ENCODE measurements at regions of chr3 and their contacts with region 1.

Region 1: DNA sequence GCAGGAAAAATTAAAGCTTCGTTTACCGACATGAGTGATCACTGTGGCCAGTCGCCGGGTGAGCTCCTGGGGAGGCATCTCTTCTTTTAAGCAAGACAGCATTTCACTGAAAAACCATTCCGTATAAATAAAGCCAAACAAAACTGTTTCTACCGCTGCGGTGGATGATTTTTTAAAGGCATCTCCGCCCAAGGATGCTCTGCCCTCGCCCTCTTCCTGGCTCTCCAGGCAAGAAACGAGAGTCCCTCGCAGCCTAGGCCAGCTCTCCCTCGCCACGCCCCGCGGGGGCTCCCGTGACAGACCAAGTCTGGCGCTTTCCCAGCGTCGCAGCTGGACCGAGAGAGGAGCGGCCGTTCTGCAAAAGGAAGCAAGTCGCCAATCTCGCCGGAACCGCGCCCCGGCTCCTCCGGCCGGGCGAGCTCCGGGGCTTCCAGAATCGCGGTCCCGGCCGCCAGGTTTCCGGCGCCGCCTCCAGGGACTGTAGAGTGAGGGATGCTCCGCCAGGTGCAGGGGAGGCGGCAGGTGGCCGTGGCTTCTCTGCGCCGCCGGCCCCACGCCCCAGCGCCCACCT is 458 bp downstream of the MCF2L2 start:
- DNase-seq: peak; percentile 56 to 69 (median 58)
- ATAC-seq: peak; percentile 77
- H3K4me3 ChIP-seq: peak overlapping the region; percentile 88
- H3K27ac ChIP-seq: peak overlapping the region; percentile 34; the same call in 1 of the 3 replicates
- H3K4me1 ChIP-seq: peaks cover 8 to 25% of the 10 kb centered on the region in 2 experiments; a peak in 4 of 5 replicates
- H3K27me3 ChIP-seq: no peaks in the 10 kb centered on the region
- CTCF ChIP-seq: no peak
- EP300 ChIP-seq: no peak
- POLR2A ChIP-seq: no peak
- RAD21 ChIP-seq: no peak

Region 2: DNA sequence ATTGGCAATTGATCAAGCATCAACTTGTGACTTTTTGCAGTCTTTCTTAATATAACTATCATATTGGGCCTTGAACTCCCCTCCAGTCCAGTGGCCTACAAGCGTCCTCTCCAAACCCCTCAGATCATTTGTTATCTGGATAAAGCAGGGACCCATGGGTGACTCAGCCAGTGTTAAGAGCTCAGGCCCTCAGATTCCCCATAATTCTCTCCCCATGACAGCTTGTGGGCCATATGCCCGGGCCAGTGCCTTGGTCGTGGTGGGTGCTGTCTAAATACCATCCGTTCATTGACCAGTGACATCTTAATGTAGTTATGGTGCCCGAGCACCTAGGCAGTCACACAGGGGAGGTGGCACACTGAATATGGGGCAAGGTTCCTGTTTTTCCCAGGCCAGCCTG is 17.7 kb before region 1 on chr3:
- CTCF ChIA-PET with region 1: no interaction called
- POLR2A ChIA-PET with region 1: interaction called, 32 read pairs
- in situ Hi-C with region 1: no loop called
- intact Hi-C with region 1: no loop called
- DNase-seq: peak; percentile 38 to 91 (median 70)
- ATAC-seq: peak; percentile 95
- H3K4me3 ChIP-seq: no peak overlapping the region
- H3K27ac ChIP-seq: peak overlapping the region; percentile 43; the same call in 1 of the 3 replicates
- H3K4me1 ChIP-seq: peaks cover 13 to 31% of the 10 kb centered on the region in 2 experiments; a peak in 4 of 5 replicates
- H3K27me3 ChIP-seq: no peaks in the 10 kb centered on the region
- CTCF ChIP-seq: no peak
- EP300 ChIP-seq: peak; percentile 87
- POLR2A ChIP-seq: no peak
- RAD21 ChIP-seq: no peak

Region 3: GRCh38 chr3:183502237-183503181 is 74.5 kb after region 1 on chr3:
- CTCF ChIA-PET with region 1: no interaction called
- POLR2A ChIA-PET with region 1: no interaction called
- in situ Hi-C with region 1: no loop called
- intact Hi-C with region 1: no loop called
- DNase-seq: no peak
- ATAC-seq: peak; percentile 54
- H3K4me3 ChIP-seq: no peak overlapping the region
- H3K27ac ChIP-seq: no peak overlapping the region
- H3K4me1 ChIP-seq: peaks cover 0 to 8% of the 10 kb centered on the region in 2 experiments; a peak in 3 of 5 replicates
- H3K27me3 ChIP-seq: no peaks in the 10 kb centered on the region
- CTCF ChIP-seq: peak; percentile 14 to 48 (median 21); a peak in 2 of 6 replicates
- EP300 ChIP-seq: no peak
- POLR2A ChIP-seq: no peak
- RAD21 ChIP-seq: peak; percentile 21 to 39; a peak in 3 of 4 replicates